OCI-LY7 (cell line): ENCODE measurements at regions of chr13 and their contacts with region 1.

Region 1: GRCh38 chr13:75549262-75550158 is at the start of gene UCHL3:
- DNase-seq: peak; percentile 99
- H3K4me3 ChIP-seq: peak within 1 kb of the TSS; percentile 97
- H3K27ac ChIP-seq: peak within 1 kb of the TSS; percentile 43
- H3K4me1 ChIP-seq: peaks cover 31% of the 10 kb centered on the region
- CTCF ChIP-seq: peak; percentile 82
- total RNA-seq, gene UCHL3: 34.7 and 39.6 TPM in 2 replicates

Region 2: GRCh38 chr13:75372517-75372916 is 177.0 kb before region 1 on chr13:
- CTCF ChIA-PET with region 1: no interaction called
- POLR2A ChIA-PET with region 1: interaction called, 5 read pairs
- intact Hi-C with region 1: loop called (anchors 1 kb)
- DNase-seq: peak; percentile 74
- H3K4me3 ChIP-seq: no peak overlapping the region
- H3K27ac ChIP-seq: no peak overlapping the region
- H3K4me1 ChIP-seq: peaks cover 47% of the 10 kb centered on the region
- CTCF ChIP-seq: peak; percentile 85

Region 3: DNA sequence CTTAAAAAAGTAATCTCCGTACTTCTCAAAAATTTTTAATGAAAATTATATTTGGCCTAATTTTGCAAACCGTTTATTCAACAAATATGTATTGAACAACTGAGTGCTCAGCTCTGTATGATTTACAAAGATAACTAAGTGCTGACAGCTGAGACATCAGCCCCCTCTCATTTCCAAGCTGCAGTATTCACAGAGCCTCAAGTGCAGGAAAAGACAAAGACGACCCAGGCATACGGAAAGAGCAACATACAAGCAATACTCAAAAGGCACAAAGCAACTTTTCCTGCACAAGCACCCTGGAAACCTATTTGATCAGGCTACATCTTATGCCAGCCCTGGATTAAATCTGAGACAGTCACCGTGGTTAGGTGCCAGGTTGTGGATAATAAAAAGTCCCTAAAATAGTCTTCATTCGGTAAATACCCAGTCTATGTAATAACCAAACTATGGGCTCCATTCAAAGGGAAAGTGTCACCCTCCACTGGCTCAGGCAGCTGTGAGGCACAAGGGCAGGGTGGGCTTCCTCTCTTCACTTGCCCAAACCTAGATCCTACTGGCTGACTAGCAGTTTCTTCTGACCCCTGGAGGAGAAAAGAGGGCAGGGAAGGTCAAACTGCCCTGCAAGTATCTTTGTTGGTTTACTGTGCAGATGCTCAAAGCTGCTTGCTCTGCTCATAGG is 133.0 kb before region 1 on chr13:
- CTCF ChIA-PET with region 1: no interaction called
- POLR2A ChIA-PET with region 1: no interaction called
- intact Hi-C with region 1: loop called (anchors 5 kb)
- DNase-seq: peak; percentile 80
- H3K4me3 ChIP-seq: peak overlapping the region; percentile 29
- H3K27ac ChIP-seq: peak overlapping the region; percentile 77
- H3K4me1 ChIP-seq: peaks cover 99% of the 10 kb centered on the region
- CTCF ChIP-seq: peak; percentile 69

Region 4: DNA sequence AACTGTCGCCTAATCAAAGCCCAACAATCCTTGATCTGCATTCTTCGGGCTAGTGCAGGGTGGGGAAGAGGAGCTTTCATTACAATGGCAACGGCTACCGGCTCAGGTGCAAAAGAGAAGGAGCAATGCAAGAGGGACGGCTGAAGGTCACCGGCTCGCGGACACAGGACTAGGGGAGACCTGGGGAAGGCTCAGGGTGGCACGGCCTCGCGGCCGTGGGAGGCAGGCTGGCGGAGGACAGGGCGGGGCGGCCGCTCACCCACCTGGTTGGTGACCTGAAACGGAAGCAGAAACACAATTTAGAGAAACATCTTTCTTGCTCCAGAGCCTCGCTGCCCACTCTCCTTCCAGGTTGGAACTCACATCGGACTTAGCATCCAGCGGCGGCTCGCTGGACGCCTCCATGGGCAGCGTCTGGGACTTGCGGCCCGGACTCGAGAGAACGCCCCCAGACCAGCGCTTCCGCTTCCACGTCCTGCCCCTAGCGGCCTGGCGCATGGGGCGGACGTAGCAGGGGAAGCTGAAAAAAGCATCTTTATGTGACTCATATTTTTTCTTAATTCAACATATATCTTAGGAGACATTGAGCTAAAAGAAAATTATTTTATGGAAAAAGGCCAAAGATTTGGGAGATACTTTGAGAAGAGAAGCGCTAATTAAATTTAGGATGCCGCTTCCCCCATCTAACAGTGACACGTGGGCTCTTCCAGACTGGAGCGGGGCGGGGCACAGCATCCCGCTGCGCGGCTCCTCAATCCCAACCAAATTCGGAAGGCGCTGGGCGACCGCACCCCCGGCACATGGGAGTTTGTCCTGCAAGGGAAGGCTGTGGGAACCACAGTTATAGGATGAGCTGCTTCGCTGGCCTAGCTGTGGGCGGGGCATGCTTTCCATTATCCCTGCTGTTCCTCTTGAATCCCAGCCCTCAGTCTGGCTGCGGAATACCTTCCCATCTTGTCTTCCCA is 11.8 kb before region 1 on chr13 and contains the start of gene COMMD6:
- CTCF ChIA-PET with region 1: no interaction called
- POLR2A ChIA-PET with region 1: interaction called, 8 read pairs
- intact Hi-C with region 1: loop called (anchors 1 kb)
- DNase-seq: peak; percentile 85
- H3K4me3 ChIP-seq: peak within 1 kb of the TSS; percentile 91
- H3K27ac ChIP-seq: peak within 1 kb of the TSS; percentile 1
- H3K4me1 ChIP-seq: peaks cover 16% of the 10 kb centered on the region
- CTCF ChIP-seq: 0 out of 2 replicates have a peak, but pooled peaks have one; percentile 24
- total RNA-seq, gene COMMD6: 30.6 and 87.6 TPM in 2 replicates